ENCODE measurements at regions of chr15 and their contacts with region 1.

Region 1: GRCh38 chr15:55654561-55655031 is 66.5 kb upstream of the PYGO1 start:
- DNase-seq: peak; percentile 49
- ATAC-seq: peak; percentile 100
- H3K4me3 ChIP-seq: no peak overlapping the region
- H3K27ac ChIP-seq: peak overlapping the region; percentile 14; the same call in 1 of the 2 replicates
- H3K4me1 ChIP-seq: peaks cover 3% of the 10 kb centered on the region
- H3K27me3 ChIP-seq: peaks cover 8% of the 10 kb centered on the region; the same call in 1 of the 2 replicates
- CTCF ChIP-seq: no peak

Region 2: DNA sequence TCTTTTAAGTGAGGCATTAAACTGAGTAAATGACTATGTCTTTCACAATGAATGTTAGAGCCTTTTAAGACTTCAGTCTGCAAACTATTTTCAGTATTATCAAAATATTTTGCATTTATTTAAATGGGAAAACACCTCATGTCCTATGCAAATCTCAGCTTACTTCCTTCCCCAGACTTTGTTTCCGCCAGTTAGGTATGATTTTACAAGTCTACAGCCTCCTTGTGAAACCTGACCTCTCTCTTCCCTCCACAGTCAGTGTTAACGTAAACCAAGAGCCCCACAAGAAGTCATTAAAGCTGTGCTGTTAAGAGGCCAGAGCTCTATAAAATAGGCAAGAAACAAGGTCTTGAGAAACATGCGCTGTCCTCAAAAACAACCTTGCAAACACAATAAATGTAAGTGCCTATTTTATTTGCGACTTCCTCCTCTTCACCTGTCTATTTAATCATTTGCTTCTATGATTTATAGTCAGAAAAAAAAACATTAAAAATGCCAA is 40.1 kb after region 1 on chr15:
- CTCF ChIA-PET with region 1: no interaction called
- POLR2A ChIA-PET with region 1: no interaction called
- intact Hi-C with region 1: loop called (anchors 2 kb)
- DNase-seq: peak; percentile 57
- ATAC-seq: peak; percentile 94
- H3K4me3 ChIP-seq: no peak overlapping the region
- H3K27ac ChIP-seq: peak overlapping the region; percentile 23; the same call in 1 of the 2 replicates
- H3K4me1 ChIP-seq: peaks cover 11% of the 10 kb centered on the region
- H3K27me3 ChIP-seq: peaks cover 3% of the 10 kb centered on the region; the same call in 1 of the 2 replicates
- CTCF ChIP-seq: no peak